CD14-positive monocyte (primary cell): ENCODE measurements at regions of chr17 and their contacts with region 1.

Region 1: DNA sequence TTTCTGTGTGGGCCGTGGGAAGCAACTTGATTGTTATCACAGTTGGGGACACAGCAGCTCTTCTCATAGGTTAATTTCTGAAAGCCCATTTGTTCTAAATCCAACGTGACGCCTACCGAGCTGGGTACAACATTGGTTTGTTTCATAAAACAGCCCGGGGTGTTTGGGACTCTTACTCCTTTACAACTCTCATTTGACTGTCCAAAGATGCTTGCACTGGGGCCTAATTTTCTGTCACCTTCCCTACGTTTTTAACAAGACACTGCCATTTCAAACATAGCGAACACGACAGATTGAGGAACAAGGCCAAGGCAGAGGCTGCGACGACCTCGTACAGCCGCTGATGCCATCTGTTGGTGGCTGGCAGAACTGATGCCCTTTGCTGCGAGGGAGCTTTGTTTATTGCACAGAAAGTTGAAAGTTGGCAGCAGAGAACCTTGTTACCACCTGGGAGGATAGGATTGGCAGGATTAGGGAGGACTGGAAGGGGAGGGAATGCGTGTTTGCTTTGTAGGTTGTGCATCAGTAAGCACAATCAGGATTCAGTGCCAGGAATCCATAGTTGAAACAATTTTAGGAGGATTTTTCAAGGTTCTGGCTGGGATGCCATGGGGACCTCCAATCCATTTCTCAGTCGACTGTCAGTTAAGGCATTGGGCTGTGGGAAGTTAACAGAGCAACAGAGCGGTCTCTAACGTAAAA is 98.3 kb downstream of the PITPNC1 start:
- DNase-seq: peak; percentile 78 to 87 (median 84)
- H3K4me3 ChIP-seq: peak overlapping the region in 1 of 3 experiments; percentile 37
- H3K4me3 Mint-ChIP-seq: peak overlapping the region; percentile 65 to 81
- H3K27ac ChIP-seq: no peak overlapping the region
- H3K27ac Mint-ChIP-seq: peak overlapping the region in 5 of 7 donors; percentile 17 to 84 (median 72)
- H3K4me1 ChIP-seq: peaks cover 8 to 16% of the 10 kb centered on the region in 2 donors
- H3K4me1 Mint-ChIP-seq: peaks cover 33% of the 10 kb centered on the region
- H3K27me3 ChIP-seq: no peaks in the 10 kb centered on the region
- H3K27me3 Mint-ChIP-seq: peaks cover 0 to 5% (median 4%) of the 10 kb centered on the region in 3 donors
- CTCF ChIP-seq: peak; percentile 89

Region 2: GRCh38 chr17:67376737-67377487 is 98.5 kb before region 1 on chr17 and contains the start of gene PITPNC1:
- intact Hi-C with region 1: loop called (anchors 2 to 10 kb)
- DNase-seq: peak; percentile 71 to 79 (median 73)
- H3K4me3 ChIP-seq: peak within 1 kb of the TSS; percentile 87 to 99 (median 93)
- H3K4me3 Mint-ChIP-seq: peak within 1 kb of the TSS; percentile 90 to 93
- H3K27ac ChIP-seq: peak within 1 kb of the TSS; percentile 83 to 92
- H3K27ac Mint-ChIP-seq: peak within 1 kb of the TSS; percentile 84 to 93 (median 91)
- H3K4me1 ChIP-seq: peaks cover 24 to 25% of the 10 kb centered on the region in 2 donors
- H3K4me1 Mint-ChIP-seq: peaks cover 35% of the 10 kb centered on the region
- H3K27me3 ChIP-seq: no peaks in the 10 kb centered on the region
- H3K27me3 Mint-ChIP-seq: peaks cover 0 to 14% (median 0%) of the 10 kb centered on the region in 3 donors
- CTCF ChIP-seq: no peak
- polyA plus RNA-seq, gene PITPNC1: 18.5 to 31.0 (median 21.7) TPM

Region 3: DNA sequence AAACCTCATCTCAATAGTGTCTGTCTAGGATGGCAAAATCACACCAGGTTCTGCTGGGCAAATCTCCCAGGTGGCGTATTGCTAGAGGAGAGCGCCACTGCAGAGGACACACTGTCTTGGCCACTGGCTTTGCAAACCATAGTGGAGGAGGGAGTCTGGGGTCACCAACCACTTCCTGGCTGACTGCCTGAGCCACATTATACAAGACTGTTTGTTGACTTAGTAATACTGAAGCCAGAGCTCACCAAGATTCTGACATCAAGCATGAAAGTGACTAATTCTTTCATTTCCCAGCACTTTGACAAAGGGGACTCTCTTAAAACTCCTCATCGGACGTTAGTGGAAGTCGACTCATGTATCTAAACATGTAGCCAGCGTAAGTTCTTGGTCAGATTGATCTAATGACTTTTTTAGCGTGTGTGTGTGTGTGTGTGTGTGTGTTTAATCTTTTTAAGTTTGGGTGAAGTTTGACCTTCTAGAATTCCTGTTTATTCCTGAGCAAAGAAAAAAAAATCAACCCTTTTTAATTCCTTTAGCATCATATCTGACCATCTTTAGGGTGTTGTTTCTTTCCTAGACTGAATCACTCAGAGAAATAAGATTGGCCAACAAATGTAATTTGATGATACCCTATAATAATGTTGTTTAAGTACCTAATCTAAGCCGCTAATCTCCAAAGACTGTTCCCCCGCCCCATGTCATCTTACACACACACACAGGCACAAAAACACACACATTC is 84.6 kb before region 1 on chr17:
- intact Hi-C with region 1: loop called in 1 of 2 experiments (anchors 5 kb)
- DNase-seq: peak in 2 of 3 donors; percentile 38 to 59
- H3K4me3 ChIP-seq: no peak overlapping the region
- H3K4me3 Mint-ChIP-seq: peak overlapping the region in 1 of 2 donors; percentile 1
- H3K27ac ChIP-seq: no peak overlapping the region
- H3K27ac Mint-ChIP-seq: peak overlapping the region in 5 of 7 donors; percentile 20 to 84 (median 53)
- H3K4me1 ChIP-seq: no peaks in the 10 kb centered on the region
- H3K4me1 Mint-ChIP-seq: peaks cover 18% of the 10 kb centered on the region
- H3K27me3 ChIP-seq: no peaks in the 10 kb centered on the region
- H3K27me3 Mint-ChIP-seq: peaks cover 0 to 5% (median 0%) of the 10 kb centered on the region in 3 donors
- CTCF ChIP-seq: no peak

Region 4: GRCh38 chr17:67411397-67411796 is 64.0 kb before region 1 on chr17:
- intact Hi-C with region 1: no loop called
- DNase-seq: peak; percentile 74 to 88 (median 79)
- H3K4me3 ChIP-seq: no peak overlapping the region
- H3K4me3 Mint-ChIP-seq: no peak overlapping the region
- H3K27ac ChIP-seq: peak overlapping the region; percentile 28
- H3K27ac Mint-ChIP-seq: peak overlapping the region; percentile 35 to 80 (median 53)
- H3K4me1 ChIP-seq: peaks cover 15 to 17% of the 10 kb centered on the region in 2 donors
- H3K4me1 Mint-ChIP-seq: peaks cover 21% of the 10 kb centered on the region
- H3K27me3 ChIP-seq: no peaks in the 10 kb centered on the region
- H3K27me3 Mint-ChIP-seq: peaks cover 0 to 2% (median 0%) of the 10 kb centered on the region in 3 donors
- CTCF ChIP-seq: no peak

Region 5: DNA sequence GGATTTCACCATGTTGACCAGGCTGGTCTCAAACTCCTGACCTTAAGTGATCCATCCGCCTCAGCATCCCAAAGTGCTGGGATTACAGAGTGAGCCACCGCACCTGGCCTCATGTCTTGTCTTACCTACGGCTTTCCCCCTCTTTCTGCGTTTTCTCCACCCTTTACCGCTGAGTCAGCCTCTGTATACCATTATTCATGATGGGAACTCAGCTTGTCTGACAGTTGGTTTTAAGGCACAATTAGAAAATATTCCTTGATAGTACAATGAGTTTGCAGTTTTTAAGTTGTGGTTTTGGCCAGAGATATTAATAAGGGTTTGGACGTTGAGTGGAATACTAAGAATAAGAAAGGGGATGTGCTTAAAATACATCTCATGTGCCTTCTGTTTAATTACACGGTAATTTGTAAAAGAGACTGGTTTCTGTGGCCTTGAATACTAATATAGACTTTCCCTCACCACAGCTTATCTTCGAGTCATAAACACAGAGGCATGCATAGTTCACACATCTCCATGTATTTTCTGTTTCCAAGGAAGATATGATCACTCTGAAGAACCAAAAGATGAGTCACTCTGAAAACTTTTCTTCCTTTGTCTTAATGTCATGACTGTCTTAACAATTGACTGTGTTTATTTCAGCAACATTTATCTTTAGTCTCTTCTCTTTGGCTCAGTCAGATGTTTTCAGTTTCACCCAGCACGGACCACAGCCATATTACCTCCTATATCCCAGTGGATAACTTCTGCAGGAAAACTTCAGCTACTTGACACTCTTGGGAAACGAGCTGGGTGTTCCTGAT is 43.9 kb before region 1 on chr17:
- intact Hi-C with region 1: loop called in 1 of 2 experiments (anchors 5 kb)
- DNase-seq: peak; percentile 49 to 73 (median 63)
- H3K4me3 ChIP-seq: peak overlapping the region in 1 of 3 experiments; percentile 0
- H3K4me3 Mint-ChIP-seq: peak overlapping the region in 1 of 2 donors; percentile 44
- H3K27ac ChIP-seq: peak overlapping the region in 1 of 2 donors; percentile 79
- H3K27ac Mint-ChIP-seq: peak overlapping the region; percentile 34 to 89 (median 71)
- H3K4me1 ChIP-seq: peaks cover 55 to 57% of the 10 kb centered on the region in 2 donors
- H3K4me1 Mint-ChIP-seq: peaks cover 52% of the 10 kb centered on the region
- H3K27me3 ChIP-seq: no peaks in the 10 kb centered on the region
- H3K27me3 Mint-ChIP-seq: no peaks in the 10 kb centered on the region
- CTCF ChIP-seq: no peak

Region 6: GRCh38 chr17:67441052-67441927 is 34.1 kb before region 1 on chr17:
- intact Hi-C with region 1: loop called (anchors 5 kb)
- DNase-seq: peak; percentile 80 to 94 (median 86)
- H3K4me3 ChIP-seq: peak overlapping the region in 2 of 3 experiments; percentile 0 to 50
- H3K4me3 Mint-ChIP-seq: peak overlapping the region; percentile 44 to 78
- H3K27ac ChIP-seq: peak overlapping the region; percentile 61 to 92
- H3K27ac Mint-ChIP-seq: peak overlapping the region; percentile 79 to 92 (median 88)
- H3K4me1 ChIP-seq: peaks cover 54 to 57% of the 10 kb centered on the region in 2 donors
- H3K4me1 Mint-ChIP-seq: peaks cover 64% of the 10 kb centered on the region
- H3K27me3 ChIP-seq: no peaks in the 10 kb centered on the region
- H3K27me3 Mint-ChIP-seq: peaks cover 0 to 3% (median 2%) of the 10 kb centered on the region in 3 donors
- CTCF ChIP-seq: no peak